H1 (cell line): ENCODE measurements at regions of chr1 and their contacts with region 1.

Region 1: DNA sequence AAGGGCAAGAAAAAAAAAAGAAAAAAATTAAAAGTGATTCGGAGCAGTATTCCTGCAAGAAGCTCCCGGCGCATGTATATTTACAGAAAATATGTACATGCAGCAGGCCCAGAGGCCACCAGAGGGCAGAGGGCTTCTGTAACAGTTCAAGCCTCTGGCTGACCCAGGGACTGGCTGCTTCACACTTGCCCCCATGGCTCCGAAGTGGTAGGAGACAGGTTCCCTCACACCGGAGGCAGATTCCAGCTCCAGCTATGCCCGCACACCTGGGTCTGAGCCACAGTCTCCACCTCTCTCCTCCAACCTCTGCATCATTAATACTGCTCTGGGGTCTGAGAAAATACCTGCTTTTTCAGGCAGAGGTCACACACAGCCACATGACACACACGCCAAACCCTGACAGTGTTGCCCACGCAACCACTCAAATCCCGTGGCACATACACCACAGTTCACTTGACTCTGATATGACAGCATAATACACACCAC is 2.2 kb upstream of the ARHGAP30 start:
- DNase-seq: peak; percentile 33 to 65
- H3K4me3 ChIP-seq: no peak overlapping the region
- H3K27ac ChIP-seq: no peak overlapping the region
- H3K4me1 ChIP-seq: peaks cover 0 to 8% (median 3%) of the 10 kb centered on the region in 4 experiments; a peak in 3 of 7 replicates
- H3K27me3 ChIP-seq: no peaks in the 10 kb centered on the region
- CTCF ChIP-seq: peak; percentile 72 to 84 (median 81)
- EP300 ChIP-seq: no peak
- POLR2A ChIP-seq: no peak
- RAD21 ChIP-seq: peak; percentile 66 to 81

Region 2: GRCh38 chr1:161045750-161046571 is 26.0 kb before region 1 on chr1 and contains the start of gene USF1:
- CTCF ChIA-PET with region 1: interaction called, 10 read pairs
- POLR2A ChIA-PET with region 1: interaction called, 8 read pairs
- DNase-seq: peak; percentile 86 to 93
- H3K4me3 ChIP-seq: peak within 1 kb of the TSS; percentile 75 to 98 (median 87)
- H3K27ac ChIP-seq: peak within 1 kb of the TSS; percentile 97
- H3K4me1 ChIP-seq: peaks cover 0 to 4% (median 1%) of the 10 kb centered on the region in 4 experiments; a peak in 2 of 7 replicates
- H3K27me3 ChIP-seq: peaks cover 0 to 17% (median 8%) of the 10 kb centered on the region in 4 experiments; a peak in 6 of 7 replicates
- CTCF ChIP-seq: no peak
- EP300 ChIP-seq: no peak
- POLR2A ChIP-seq: peak; percentile 78 to 96
- RAD21 ChIP-seq: no peak
- total RNA-seq, gene USF1: 68.9 and 74.6 TPM in 2 replicates

Region 3: DNA sequence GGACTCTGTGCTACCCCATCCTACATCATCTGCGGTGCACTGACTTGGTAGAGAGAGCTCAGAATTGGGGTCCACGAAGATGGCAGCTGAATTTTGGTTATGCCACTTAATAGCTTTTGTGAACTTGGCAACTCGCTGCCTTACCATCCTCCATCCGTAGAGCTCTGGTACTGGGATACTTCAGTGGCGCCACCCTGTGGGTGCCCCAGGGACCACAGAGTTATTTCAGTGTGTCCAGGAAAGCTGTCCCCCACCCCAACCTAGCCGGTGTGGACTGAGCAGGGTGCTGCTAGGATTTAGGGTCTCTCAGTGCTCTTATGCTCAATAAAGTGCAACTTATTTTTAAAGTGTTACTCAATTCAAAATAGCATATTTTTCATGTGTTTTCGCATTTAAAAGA is 17.1 kb before region 1 on chr1:
- CTCF ChIA-PET with region 1: interaction called, 29 read pairs
- POLR2A ChIA-PET with region 1: interaction called, 4 read pairs
- DNase-seq: no peak
- H3K4me3 ChIP-seq: no peak overlapping the region
- H3K27ac ChIP-seq: no peak overlapping the region
- H3K4me1 ChIP-seq: no peaks in the 10 kb centered on the region
- H3K27me3 ChIP-seq: no peaks in the 10 kb centered on the region
- CTCF ChIP-seq: peak; percentile 48 to 64 (median 49); a peak in 3 of 4 replicates
- EP300 ChIP-seq: no peak
- POLR2A ChIP-seq: no peak
- RAD21 ChIP-seq: peak; percentile 18 to 39; a peak in 2 of 4 replicates

Region 4: GRCh38 chr1:161082991-161083742 is 11.2 kb after region 1 on chr1:
- CTCF ChIA-PET with region 1: interaction called, 156 read pairs
- POLR2A ChIA-PET with region 1: interaction called, 5 read pairs
- DNase-seq: no peak
- H3K4me3 ChIP-seq: no peak overlapping the region
- H3K27ac ChIP-seq: no peak overlapping the region
- H3K4me1 ChIP-seq: peaks cover 0 to 6% (median 0%) of the 10 kb centered on the region in 4 experiments; a peak in 4 of 7 replicates
- H3K27me3 ChIP-seq: no peaks in the 10 kb centered on the region
- CTCF ChIP-seq: no peak
- EP300 ChIP-seq: no peak
- POLR2A ChIP-seq: no peak
- RAD21 ChIP-seq: no peak

Region 5: DNA sequence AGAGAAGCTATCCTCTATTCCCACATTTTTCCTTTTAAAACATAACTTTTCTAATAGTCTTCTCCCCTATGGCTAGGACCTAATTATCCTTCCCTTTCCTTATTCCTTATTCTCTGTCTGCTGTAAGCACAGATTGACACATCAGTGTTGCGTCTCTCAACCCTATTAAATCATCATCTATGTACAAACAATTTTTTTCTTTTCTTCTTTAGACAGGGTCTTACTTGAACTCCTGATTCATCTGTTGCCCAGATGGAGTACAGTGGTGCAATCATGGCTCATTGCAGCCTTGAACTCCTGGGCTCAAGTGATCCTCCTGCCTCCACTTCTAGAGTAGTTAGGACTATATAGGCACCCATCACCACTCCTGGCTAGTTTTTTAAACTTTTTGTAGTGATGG is 34.5 kb after region 1 on chr1:
- CTCF ChIA-PET with region 1: interaction called, 282 read pairs
- POLR2A ChIA-PET with region 1: no interaction called
- DNase-seq: no peak
- H3K4me3 ChIP-seq: no peak overlapping the region
- H3K27ac ChIP-seq: no peak overlapping the region
- H3K4me1 ChIP-seq: no peaks in the 10 kb centered on the region
- H3K27me3 ChIP-seq: no peaks in the 10 kb centered on the region
- CTCF ChIP-seq: no peak
- EP300 ChIP-seq: no peak
- POLR2A ChIP-seq: no peak
- RAD21 ChIP-seq: no peak

Region 6: GRCh38 chr1:161139765-161140164 is 67.8 kb after region 1 on chr1:
- CTCF ChIA-PET with region 1: interaction called, 41 read pairs
- POLR2A ChIA-PET with region 1: no interaction called
- DNase-seq: no peak
- H3K4me3 ChIP-seq: no peak overlapping the region
- H3K27ac ChIP-seq: no peak overlapping the region
- H3K4me1 ChIP-seq: no peaks in the 10 kb centered on the region
- H3K27me3 ChIP-seq: no peaks in the 10 kb centered on the region
- CTCF ChIP-seq: peak in 2 of 3 experiments; percentile 24 to 43; a peak in 2 of 4 replicates
- EP300 ChIP-seq: no peak
- POLR2A ChIP-seq: no peak
- RAD21 ChIP-seq: peak; percentile 60 to 68